Naive thymus-derived CD4-positive, alpha-beta T cell (primary cell): ENCODE measurements at regions of chr6 and their contacts with region 1.

Region 1: DNA sequence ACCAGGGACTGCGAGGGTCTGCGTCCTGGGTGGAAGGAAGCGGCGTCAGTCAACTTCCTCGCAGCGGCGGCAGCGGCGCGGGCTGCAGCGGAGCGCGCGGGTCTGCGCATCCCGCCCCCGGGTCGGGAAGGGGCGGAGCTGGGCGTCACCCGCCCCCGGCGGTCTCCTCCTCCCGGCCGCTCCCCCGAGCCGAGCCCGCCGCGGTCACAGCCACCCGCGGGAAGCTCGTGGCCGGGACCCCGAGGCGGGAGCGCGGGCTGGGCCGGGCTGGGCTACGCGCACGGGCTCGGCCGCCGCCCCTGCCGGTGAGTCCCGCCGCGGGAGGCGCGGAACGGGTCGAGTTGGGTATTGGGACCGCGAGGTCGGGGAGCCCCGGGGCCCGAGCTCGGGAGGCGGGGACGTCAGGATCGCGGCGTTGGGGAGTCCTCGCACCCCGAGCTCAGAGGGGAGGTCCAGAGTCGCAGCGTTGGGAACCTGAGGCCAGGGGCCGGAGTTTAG is at the start of gene PAQR8:
- DNase-seq: peak; percentile 77 to 89 (median 86)
- ATAC-seq: peak; percentile 95
- H3K4me3 ChIP-seq: peak within 1 kb of the TSS; percentile 90
- H3K4me3 Mint-ChIP-seq: peak within 1 kb of the TSS; percentile 83 to 100 (median 98)
- H3K27ac ChIP-seq: peak within 1 kb of the TSS; percentile 86
- H3K27ac Mint-ChIP-seq: peak within 1 kb of the TSS; percentile 90 to 99 (median 94)
- H3K4me1 ChIP-seq: peaks cover 25 to 28% of the 10 kb centered on the region in 2 donors
- H3K4me1 Mint-ChIP-seq: peaks cover 25 to 55% (median 45%) of the 10 kb centered on the region in 7 donors
- H3K27me3 ChIP-seq: no peaks in the 10 kb centered on the region
- H3K27me3 Mint-ChIP-seq: peaks cover 0 to 9% (median 0%) of the 10 kb centered on the region in 5 donors
- total RNA-seq, gene PAQR8: 7.5 to 46.2 (median 21.6) TPM

Region 2: DNA sequence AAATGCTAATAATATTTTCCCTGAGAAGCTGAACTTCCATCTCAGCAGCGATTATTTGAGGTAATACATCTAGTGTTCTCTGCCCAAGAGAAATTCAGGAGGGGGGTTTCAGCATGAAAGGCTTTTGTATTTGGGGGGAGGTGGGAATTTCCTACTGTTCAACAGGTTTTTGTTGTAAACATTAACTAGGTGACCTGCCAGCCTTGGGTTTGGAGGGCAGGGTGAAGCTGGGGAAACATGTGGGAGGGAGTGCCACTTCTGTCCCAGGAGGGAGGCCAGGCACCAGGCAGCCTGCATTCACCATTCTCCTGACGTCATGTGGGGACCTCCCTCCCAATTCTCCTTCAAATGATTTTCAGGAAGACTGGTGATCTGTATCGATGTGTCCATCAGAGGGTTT is 236.9 kb before region 1 on chr6:
- CTCF ChIA-PET with region 1: no interaction called
- POLR2A ChIA-PET with region 1: no interaction called
- intact Hi-C with region 1: no loop called
- DNase-seq: no peak
- ATAC-seq: no peak
- H3K4me3 ChIP-seq: no peak overlapping the region
- H3K4me3 Mint-ChIP-seq: no peak overlapping the region
- H3K27ac ChIP-seq: no peak overlapping the region
- H3K27ac Mint-ChIP-seq: no peak overlapping the region
- H3K4me1 ChIP-seq: no peaks in the 10 kb centered on the region
- H3K4me1 Mint-ChIP-seq: no peaks in the 10 kb centered on the region
- H3K27me3 ChIP-seq: no peaks in the 10 kb centered on the region
- H3K27me3 Mint-ChIP-seq: peaks cover 24 to 58% (median 54%) of the 10 kb centered on the region in 5 donors

Region 3: GRCh38 chr6:52263709-52264540 is 98.1 kb before region 1 on chr6:
- CTCF ChIA-PET with region 1: no interaction called
- POLR2A ChIA-PET with region 1: no interaction called
- intact Hi-C with region 1: no loop called
- DNase-seq: peak; percentile 42 to 73 (median 64)
- ATAC-seq: peak; percentile 91
- H3K4me3 ChIP-seq: no peak overlapping the region
- H3K4me3 Mint-ChIP-seq: peak overlapping the region in 4 of 10 donors; percentile 25 to 44 (median 40)
- H3K27ac ChIP-seq: no peak overlapping the region
- H3K27ac Mint-ChIP-seq: peak overlapping the region in 7 of 9 donors; percentile 1 to 90 (median 18)
- H3K4me1 ChIP-seq: peaks cover 0 to 3% of the 10 kb centered on the region in 2 donors
- H3K4me1 Mint-ChIP-seq: peaks cover 3 to 19% (median 15%) of the 10 kb centered on the region in 7 donors
- H3K27me3 ChIP-seq: no peaks in the 10 kb centered on the region
- H3K27me3 Mint-ChIP-seq: no peaks in the 10 kb centered on the region

Region 4: DNA sequence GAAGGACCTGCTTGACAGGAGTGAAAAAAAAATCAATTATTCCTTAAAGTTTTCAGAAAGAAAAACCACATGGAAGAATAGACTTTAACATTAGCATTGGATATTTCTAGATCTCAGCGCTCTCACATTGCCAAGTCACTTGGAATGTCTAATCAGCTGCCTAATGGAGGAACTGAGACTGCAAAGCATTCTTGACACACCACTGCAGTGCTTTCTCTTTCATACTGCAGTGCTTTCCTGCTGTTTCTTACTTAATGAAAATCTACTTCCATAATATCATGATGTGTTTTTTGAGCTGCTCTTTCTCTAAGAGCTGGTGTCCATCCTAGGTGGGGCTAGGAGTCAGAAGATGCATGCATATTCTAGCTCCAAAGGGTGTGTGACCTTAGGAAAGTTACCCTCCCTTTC is 57.0 kb before region 1 on chr6:
- CTCF ChIA-PET with region 1: interaction called, 10 read pairs
- POLR2A ChIA-PET with region 1: interaction called, 21 read pairs
- intact Hi-C with region 1: loop called (anchors 1 kb)
- DNase-seq: peak in 1 of 9 donors; percentile 5
- ATAC-seq: peak; percentile 62
- H3K4me3 ChIP-seq: peak overlapping the region; percentile 20
- H3K4me3 Mint-ChIP-seq: peak overlapping the region; percentile 38 to 84 (median 74)
- H3K27ac ChIP-seq: peak overlapping the region; percentile 64
- H3K27ac Mint-ChIP-seq: peak overlapping the region; percentile 68 to 98 (median 96)
- H3K4me1 ChIP-seq: peaks cover 53 to 69% of the 10 kb centered on the region in 2 donors
- H3K4me1 Mint-ChIP-seq: peaks cover 47 to 88% (median 78%) of the 10 kb centered on the region in 7 donors
- H3K27me3 ChIP-seq: no peaks in the 10 kb centered on the region
- H3K27me3 Mint-ChIP-seq: no peaks in the 10 kb centered on the region

Region 5: GRCh38 chr6:52310932-52311331 is 51.1 kb before region 1 on chr6:
- CTCF ChIA-PET with region 1: interaction called, 10 read pairs
- POLR2A ChIA-PET with region 1: interaction called, 21 read pairs
- intact Hi-C with region 1: loop called (anchors 1 kb)
- DNase-seq: no peak
- ATAC-seq: no peak
- H3K4me3 ChIP-seq: no peak overlapping the region
- H3K4me3 Mint-ChIP-seq: peak overlapping the region in 1 of 10 donors; percentile 39
- H3K27ac ChIP-seq: no peak overlapping the region
- H3K27ac Mint-ChIP-seq: peak overlapping the region in 8 of 9 donors; percentile 5 to 98 (median 73)
- H3K4me1 ChIP-seq: peaks cover 29 to 48% of the 10 kb centered on the region in 2 donors
- H3K4me1 Mint-ChIP-seq: peaks cover 37 to 88% (median 73%) of the 10 kb centered on the region in 7 donors
- H3K27me3 ChIP-seq: no peaks in the 10 kb centered on the region
- H3K27me3 Mint-ChIP-seq: no peaks in the 10 kb centered on the region

Region 6: GRCh38 chr6:52337633-52338290 is 24.2 kb before region 1 on chr6:
- CTCF ChIA-PET with region 1: interaction called, 11 read pairs
- POLR2A ChIA-PET with region 1: interaction called, 4 read pairs
- intact Hi-C with region 1: loop called in 1 of 2 experiments (anchors 1 kb)
- DNase-seq: no peak
- ATAC-seq: no peak
- H3K4me3 ChIP-seq: no peak overlapping the region
- H3K4me3 Mint-ChIP-seq: peak overlapping the region in 2 of 10 donors; percentile 8 to 68
- H3K27ac ChIP-seq: no peak overlapping the region
- H3K27ac Mint-ChIP-seq: peak overlapping the region in 8 of 9 donors; percentile 11 to 94 (median 46)
- H3K4me1 ChIP-seq: peaks cover 28 to 58% of the 10 kb centered on the region in 2 donors
- H3K4me1 Mint-ChIP-seq: peaks cover 45 to 79% (median 75%) of the 10 kb centered on the region in 7 donors
- H3K27me3 ChIP-seq: no peaks in the 10 kb centered on the region
- H3K27me3 Mint-ChIP-seq: no peaks in the 10 kb centered on the region

Region 7: DNA sequence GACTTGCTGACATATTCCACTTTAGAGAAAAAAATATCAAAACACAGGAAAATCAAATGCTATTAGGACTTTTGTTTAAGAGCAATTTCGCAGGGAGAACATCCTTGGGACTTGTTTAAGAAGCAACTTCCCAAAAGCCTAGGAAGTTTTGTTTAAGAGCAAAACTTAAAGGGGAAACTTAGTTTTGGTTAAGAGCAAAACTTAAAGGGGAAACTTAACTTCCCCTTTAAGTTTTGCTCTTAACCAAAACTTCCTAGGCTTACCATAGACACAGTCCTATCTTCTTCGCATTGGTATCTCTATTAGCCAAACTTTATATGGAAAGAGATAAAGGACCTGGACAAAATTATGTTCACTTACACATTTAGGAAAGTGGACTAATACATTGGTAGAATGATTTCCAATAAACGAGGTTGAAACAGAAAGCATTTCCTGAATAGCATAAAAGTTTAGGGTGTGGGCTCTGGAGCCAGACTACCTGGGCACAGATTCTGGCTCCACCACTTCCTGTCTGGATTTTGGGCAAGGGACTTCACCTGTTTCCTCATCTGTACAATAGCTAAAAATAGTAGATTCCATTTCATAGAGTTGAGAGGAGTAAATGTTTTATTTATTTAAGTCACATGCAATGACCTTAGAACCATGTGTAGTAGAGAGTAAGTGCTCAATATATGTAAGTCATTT is 15.7 kb after region 1 on chr6:
- CTCF ChIA-PET with region 1: interaction called, 3 read pairs
- POLR2A ChIA-PET with region 1: interaction called, 35 read pairs
- intact Hi-C with region 1: loop called in 1 of 2 experiments (anchors 1 kb)
- DNase-seq: peak in 3 of 9 donors; percentile 34 to 50 (median 36)
- ATAC-seq: peak; percentile 29
- H3K4me3 ChIP-seq: no peak overlapping the region
- H3K4me3 Mint-ChIP-seq: peak overlapping the region; percentile 22 to 87 (median 63)
- H3K27ac ChIP-seq: peak overlapping the region; percentile 52
- H3K27ac Mint-ChIP-seq: peak overlapping the region; percentile 51 to 96 (median 87)
- H3K4me1 ChIP-seq: peaks cover 10 to 54% of the 10 kb centered on the region in 2 donors
- H3K4me1 Mint-ChIP-seq: peaks cover 50 to 86% (median 82%) of the 10 kb centered on the region in 7 donors
- H3K27me3 ChIP-seq: no peaks in the 10 kb centered on the region
- H3K27me3 Mint-ChIP-seq: no peaks in the 10 kb centered on the region

Region 8: DNA sequence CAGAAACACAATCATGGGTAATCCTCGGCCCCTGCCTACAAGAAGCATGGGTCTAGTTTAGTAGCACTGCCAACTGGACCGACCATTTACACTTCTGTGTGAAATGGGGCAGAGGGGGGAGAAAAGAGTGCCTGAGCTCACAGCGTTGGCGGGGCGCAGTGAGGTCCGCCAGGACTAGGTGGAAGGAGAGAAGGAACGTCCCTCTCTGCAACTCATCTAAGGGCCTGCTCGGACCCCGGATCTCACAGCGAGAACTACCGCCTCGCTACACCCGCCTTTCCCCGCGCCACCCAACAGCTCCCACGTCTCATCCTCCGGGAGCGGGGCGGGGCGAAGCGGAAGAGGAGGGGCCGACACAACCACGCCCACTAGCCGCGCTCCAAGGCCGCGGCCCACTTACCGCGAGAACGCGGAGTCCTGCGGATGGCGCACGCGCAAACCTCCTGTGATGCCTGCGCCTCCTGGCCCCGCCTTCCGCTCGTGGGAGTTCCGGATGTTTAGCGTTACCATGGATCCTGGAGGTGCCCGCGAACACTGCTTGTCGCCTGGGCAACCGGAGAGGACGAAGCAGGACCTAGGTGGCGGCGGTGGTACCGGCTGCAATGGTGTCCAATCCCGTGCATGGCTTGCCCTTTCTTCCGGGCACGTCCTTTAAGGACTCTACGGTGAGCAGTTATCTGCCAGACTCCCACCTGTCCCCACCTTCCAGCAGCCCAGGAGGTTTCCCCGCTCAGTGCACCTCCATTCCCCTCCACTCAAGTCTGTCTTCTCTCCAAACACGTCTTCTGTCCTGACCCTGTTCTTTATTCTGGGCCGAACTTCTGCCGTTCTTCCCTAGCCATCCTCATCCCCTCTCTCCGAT is 58.0 kb after region 1 on chr6 and contains the start of gene EFHC1:
- CTCF ChIA-PET with region 1: interaction called, 8 read pairs
- POLR2A ChIA-PET with region 1: interaction called, 4 read pairs
- intact Hi-C with region 1: loop called (anchors 1 kb)
- DNase-seq: peak; percentile 95 to 98 (median 97)
- ATAC-seq: peak; percentile 97
- H3K4me3 ChIP-seq: peak within 1 kb of the TSS; percentile 73
- H3K4me3 Mint-ChIP-seq: no peak within 1 kb of the TSS
- H3K27ac ChIP-seq: peak within 1 kb of the TSS; percentile 72
- H3K27ac Mint-ChIP-seq: peak within 1 kb of the TSS in 1 of 9 donors; percentile 96
- H3K4me1 ChIP-seq: peaks cover 13 to 19% of the 10 kb centered on the region in 2 donors
- H3K4me1 Mint-ChIP-seq: peaks cover 10 to 31% (median 24%) of the 10 kb centered on the region in 7 donors
- H3K27me3 ChIP-seq: no peaks in the 10 kb centered on the region
- H3K27me3 Mint-ChIP-seq: peaks cover 0 to 5% (median 0%) of the 10 kb centered on the region in 5 donors
- total RNA-seq, gene EFHC1: 2.4 to 13.8 (median 6.0) TPM

Region 9: GRCh38 chr6:52670502-52671409 is 308.8 kb after region 1 on chr6 and contains the start of gene TMEM14A:
- CTCF ChIA-PET with region 1: no interaction called
- POLR2A ChIA-PET with region 1: no interaction called
- intact Hi-C with region 1: loop called in 1 of 2 experiments (anchors 2 kb)
- DNase-seq: peak; percentile 81 to 94 (median 88)
- ATAC-seq: peak; percentile 96
- H3K4me3 ChIP-seq: peak within 1 kb of the TSS; percentile 74
- H3K4me3 Mint-ChIP-seq: peak within 1 kb of the TSS; percentile 86 to 97 (median 92)
- H3K27ac ChIP-seq: peak within 1 kb of the TSS; percentile 67
- H3K27ac Mint-ChIP-seq: peak within 1 kb of the TSS; percentile 52 to 94 (median 84)
- H3K4me1 ChIP-seq: peaks cover 12 to 15% of the 10 kb centered on the region in 2 donors
- H3K4me1 Mint-ChIP-seq: peaks cover 25 to 38% (median 35%) of the 10 kb centered on the region in 7 donors
- H3K27me3 ChIP-seq: no peaks in the 10 kb centered on the region
- H3K27me3 Mint-ChIP-seq: peaks cover 0 to 3% (median 0%) of the 10 kb centered on the region in 5 donors
- total RNA-seq, gene TMEM14A: 5.3 to 18.2 (median 8.0) TPM